Naive thymus-derived CD4-positive, alpha-beta T cell (primary cell): ENCODE measurements at regions of chr6 and their contacts with region 1.

Region 1: GRCh38 chr6:53064726-53065215 is 433 bp upstream of the FBXO9 start:
- DNase-seq: peak; percentile 81 to 98 (median 94)
- ATAC-seq: peak; percentile 91
- H3K4me3 ChIP-seq: peak overlapping the region; percentile 95
- H3K4me3 Mint-ChIP-seq: peak overlapping the region; percentile 86 to 100 (median 99)
- H3K27ac ChIP-seq: peak overlapping the region; percentile 78
- H3K27ac Mint-ChIP-seq: peak overlapping the region; percentile 90 to 99 (median 97)
- H3K4me1 ChIP-seq: peaks cover 22% of the 10 kb centered on the region in 2 donors
- H3K4me1 Mint-ChIP-seq: peaks cover 36 to 68% (median 56%) of the 10 kb centered on the region in 7 donors
- H3K27me3 ChIP-seq: no peaks in the 10 kb centered on the region
- H3K27me3 Mint-ChIP-seq: no peaks in the 10 kb centered on the region

Region 2: DNA sequence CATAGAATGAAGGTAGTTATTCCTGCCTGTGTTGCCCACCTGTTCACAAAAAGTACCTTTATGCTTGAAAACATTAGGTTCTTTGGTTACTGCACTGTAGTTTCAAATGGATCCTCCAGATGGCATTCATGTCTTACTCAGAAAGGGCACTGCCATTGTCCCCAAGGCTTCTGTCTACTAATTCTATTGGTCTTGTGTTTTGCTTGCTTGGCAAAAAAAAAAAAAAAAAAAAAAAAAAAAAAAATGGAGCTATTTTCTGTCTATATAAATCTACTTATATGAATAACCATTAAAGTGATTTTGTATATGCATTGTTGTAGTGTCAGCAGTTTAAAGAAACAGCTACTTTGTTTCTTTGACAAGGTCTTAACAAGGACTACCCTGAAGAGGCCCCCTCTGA is 657.3 kb before region 1 on chr6:
- CTCF ChIA-PET with region 1: no interaction called
- POLR2A ChIA-PET with region 1: interaction called, 3 read pairs
- intact Hi-C with region 1: loop called in 1 of 2 experiments (anchors 5 kb)
- DNase-seq: peak in 5 of 9 donors; percentile 27 to 52 (median 43)
- ATAC-seq: peak; percentile 84
- H3K4me3 ChIP-seq: no peak overlapping the region
- H3K4me3 Mint-ChIP-seq: no peak overlapping the region
- H3K27ac ChIP-seq: no peak overlapping the region
- H3K27ac Mint-ChIP-seq: peak overlapping the region in 7 of 9 donors; percentile 20 to 79 (median 59)
- H3K4me1 ChIP-seq: no peaks in the 10 kb centered on the region
- H3K4me1 Mint-ChIP-seq: peaks cover 7 to 81% (median 56%) of the 10 kb centered on the region in 7 donors
- H3K27me3 ChIP-seq: no peaks in the 10 kb centered on the region
- H3K27me3 Mint-ChIP-seq: peaks cover 0 to under 1% (median 0%) of the 10 kb centered on the region in 5 donors

Region 3: DNA sequence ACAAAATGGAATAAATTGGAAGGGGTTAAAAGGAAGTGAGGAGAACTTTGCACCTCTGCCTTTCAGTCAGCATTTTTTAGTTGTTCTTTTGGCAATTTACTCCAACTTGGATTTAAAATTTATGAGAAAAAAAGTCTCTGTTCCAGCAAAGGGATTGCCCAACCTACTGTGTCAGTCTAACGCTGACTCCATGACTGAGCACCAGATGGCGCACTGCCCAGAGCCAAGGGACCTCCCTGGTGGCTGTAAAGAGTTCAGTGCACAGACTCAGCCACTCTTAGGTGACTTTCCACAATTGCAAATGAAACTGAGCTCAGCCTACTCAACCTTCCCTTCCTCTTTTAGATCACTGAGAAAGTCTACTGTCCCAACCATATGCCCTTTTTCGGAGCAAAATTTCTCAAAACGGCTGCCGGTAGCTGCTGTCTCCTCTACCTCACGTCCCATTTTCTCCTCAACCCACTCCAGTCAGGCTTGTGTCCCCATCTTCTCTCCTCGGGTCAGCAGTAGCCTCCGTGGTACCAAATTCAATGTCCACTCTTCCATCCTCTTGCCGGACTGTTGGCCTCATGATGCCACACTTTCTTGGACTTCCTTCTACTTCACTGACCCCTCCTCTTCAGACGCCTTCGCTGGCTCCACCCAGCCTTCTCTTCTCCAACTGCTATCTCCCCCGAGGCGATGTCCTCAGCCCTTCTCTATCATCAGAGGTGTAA is 340.2 kb before region 1 on chr6:
- CTCF ChIA-PET with region 1: no interaction called
- POLR2A ChIA-PET with region 1: no interaction called
- intact Hi-C with region 1: loop called in 1 of 2 experiments (anchors 1 kb)
- DNase-seq: peak in 7 of 9 donors; percentile 14 to 48 (median 25)
- ATAC-seq: peak; percentile 87
- H3K4me3 ChIP-seq: no peak overlapping the region
- H3K4me3 Mint-ChIP-seq: no peak overlapping the region
- H3K27ac ChIP-seq: no peak overlapping the region
- H3K27ac Mint-ChIP-seq: peak overlapping the region in 1 of 9 donors; percentile 16
- H3K4me1 ChIP-seq: no peaks in the 10 kb centered on the region
- H3K4me1 Mint-ChIP-seq: peaks cover 0 to 7% (median 0%) of the 10 kb centered on the region in 7 donors
- H3K27me3 ChIP-seq: no peaks in the 10 kb centered on the region
- H3K27me3 Mint-ChIP-seq: peaks cover 0 to 16% (median 0%) of the 10 kb centered on the region in 5 donors

Region 4: DNA sequence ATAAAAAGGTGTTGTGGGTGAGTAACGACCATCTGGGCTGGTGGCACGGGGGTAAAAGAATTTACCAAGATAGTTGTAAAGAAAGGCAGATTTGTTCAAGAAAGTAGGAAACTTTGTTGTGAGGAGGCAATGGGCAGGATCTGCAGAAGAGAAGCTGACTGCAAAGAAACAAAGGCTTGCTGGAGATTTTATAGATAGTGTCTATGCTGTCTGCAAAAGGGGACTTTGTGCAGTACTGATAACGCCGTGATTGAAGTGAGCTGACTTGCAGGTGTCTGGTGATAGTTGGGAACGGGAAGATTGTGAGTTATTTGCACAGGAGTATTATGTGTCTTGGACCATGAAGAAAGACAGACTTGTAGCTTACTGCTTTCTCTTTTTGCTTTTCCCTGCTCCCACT is 118.5 kb before region 1 on chr6:
- CTCF ChIA-PET with region 1: no interaction called
- POLR2A ChIA-PET with region 1: no interaction called
- intact Hi-C with region 1: no loop called
- DNase-seq: peak in 1 of 9 donors; percentile 7
- ATAC-seq: no peak
- H3K4me3 ChIP-seq: no peak overlapping the region
- H3K4me3 Mint-ChIP-seq: peak overlapping the region in 1 of 10 donors; percentile 2
- H3K27ac ChIP-seq: no peak overlapping the region
- H3K27ac Mint-ChIP-seq: no peak overlapping the region
- H3K4me1 ChIP-seq: no peaks in the 10 kb centered on the region
- H3K4me1 Mint-ChIP-seq: peaks cover 0 to 10% (median 7%) of the 10 kb centered on the region in 7 donors
- H3K27me3 ChIP-seq: no peaks in the 10 kb centered on the region
- H3K27me3 Mint-ChIP-seq: peaks cover 17 to 30% (median 22%) of the 10 kb centered on the region in 5 donors

Region 5: GRCh38 chr6:53294095-53294494 is 229.3 kb after region 1 on chr6:
- CTCF ChIA-PET with region 1: no interaction called
- POLR2A ChIA-PET with region 1: no interaction called
- intact Hi-C with region 1: no loop called
- DNase-seq: peak in 1 of 9 donors; percentile 7
- ATAC-seq: no peak
- H3K4me3 ChIP-seq: no peak overlapping the region
- H3K4me3 Mint-ChIP-seq: peak overlapping the region in 1 of 10 donors; percentile 10
- H3K27ac ChIP-seq: no peak overlapping the region
- H3K27ac Mint-ChIP-seq: peak overlapping the region in 8 of 9 donors; percentile 41 to 86 (median 74)
- H3K4me1 ChIP-seq: peaks cover 35 to 41% of the 10 kb centered on the region in 2 donors
- H3K4me1 Mint-ChIP-seq: peaks cover 46 to 94% (median 83%) of the 10 kb centered on the region in 7 donors
- H3K27me3 ChIP-seq: no peaks in the 10 kb centered on the region
- H3K27me3 Mint-ChIP-seq: no peaks in the 10 kb centered on the region

Region 6: DNA sequence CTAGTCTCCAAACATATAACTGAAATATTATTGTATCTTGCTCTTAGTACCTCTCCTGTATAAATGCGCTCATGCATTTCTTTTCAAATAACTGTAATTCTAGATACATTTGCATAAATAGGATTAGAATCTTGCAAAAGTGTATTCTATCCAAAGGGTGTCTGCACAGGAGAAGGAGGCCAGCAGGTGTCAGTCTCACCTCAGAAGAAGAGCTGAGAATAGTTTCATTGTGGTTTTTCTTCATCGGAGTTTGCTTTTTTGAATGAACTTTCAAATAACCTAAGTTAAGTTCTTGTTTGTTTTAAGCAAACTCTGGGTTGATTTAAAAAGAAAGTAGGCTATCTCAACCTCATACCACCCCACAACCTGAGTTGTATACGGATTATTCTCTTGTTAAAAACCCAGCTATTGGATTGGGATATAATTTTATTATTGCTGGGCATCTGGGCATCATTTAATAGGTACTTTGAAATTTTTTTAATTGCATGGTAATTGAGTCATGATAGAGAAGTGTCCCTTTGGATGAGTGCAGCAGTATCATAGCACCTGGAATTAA is 921.5 kb after region 1 on chr6:
- CTCF ChIA-PET with region 1: no interaction called
- POLR2A ChIA-PET with region 1: no interaction called
- intact Hi-C with region 1: no loop called
- DNase-seq: no peak
- ATAC-seq: no peak
- H3K4me3 ChIP-seq: no peak overlapping the region
- H3K4me3 Mint-ChIP-seq: no peak overlapping the region
- H3K27ac ChIP-seq: no peak overlapping the region
- H3K27ac Mint-ChIP-seq: no peak overlapping the region
- H3K4me1 ChIP-seq: no peaks in the 10 kb centered on the region
- H3K4me1 Mint-ChIP-seq: no peaks in the 10 kb centered on the region
- H3K27me3 ChIP-seq: no peaks in the 10 kb centered on the region
- H3K27me3 Mint-ChIP-seq: peaks cover 0 to 17% (median 14%) of the 10 kb centered on the region in 5 donors